CD14-positive monocyte (primary cell): ENCODE measurements at regions of chr13 and their contacts with region 1.

Region 1: DNA sequence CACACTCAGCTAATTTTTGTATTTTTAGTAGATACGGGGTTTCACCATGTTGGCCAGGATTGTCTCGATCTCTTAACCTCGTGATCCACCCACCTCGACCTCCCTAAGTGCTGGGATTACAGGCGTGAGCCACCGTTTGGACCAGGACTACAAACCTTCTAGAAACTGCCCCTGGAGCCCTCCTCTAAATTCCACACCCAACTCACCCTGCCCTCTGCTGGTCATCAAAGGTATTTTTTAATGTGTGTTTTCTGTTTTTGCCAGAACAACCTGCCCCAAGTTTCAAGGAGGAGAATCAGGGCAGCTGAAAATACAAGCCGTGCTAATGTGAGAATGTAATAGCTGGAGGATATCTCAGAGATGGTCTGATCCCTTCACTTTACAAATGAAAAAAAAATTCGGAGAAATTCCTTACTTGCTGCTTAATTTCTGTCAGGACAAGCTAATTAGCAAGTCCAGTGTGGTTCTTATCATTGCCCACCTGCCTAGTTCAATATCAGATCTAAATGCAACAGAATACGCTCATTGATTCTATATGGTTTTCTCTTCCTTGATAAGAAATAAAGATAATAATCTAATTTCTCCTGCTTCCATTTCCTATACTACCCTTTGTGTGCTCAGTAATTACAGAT is 4.1 kb downstream of the ATP8A2 start:
- DNase-seq: peak; percentile 6 to 24 (median 16)
- H3K4me3 ChIP-seq: no peak overlapping the region
- H3K4me3 Mint-ChIP-seq: no peak overlapping the region
- H3K27ac ChIP-seq: no peak overlapping the region
- H3K27ac Mint-ChIP-seq: no peak overlapping the region
- H3K4me1 ChIP-seq: no peaks in the 10 kb centered on the region
- H3K4me1 Mint-ChIP-seq: peaks cover 8% of the 10 kb centered on the region
- H3K27me3 ChIP-seq: peaks cover 35 to 56% of the 10 kb centered on the region in 2 donors
- H3K27me3 Mint-ChIP-seq: peaks cover 42 to 57% (median 48%) of the 10 kb centered on the region in 3 donors
- CTCF ChIP-seq: peak; percentile 74

Region 2: GRCh38 chr13:24995226-24995804 is 380.5 kb before region 1 on chr13:
- intact Hi-C with region 1: loop called in 1 of 2 experiments (anchors 5 kb)
- DNase-seq: peak; percentile 37 to 63 (median 61)
- H3K4me3 ChIP-seq: no peak overlapping the region
- H3K4me3 Mint-ChIP-seq: no peak overlapping the region
- H3K27ac ChIP-seq: no peak overlapping the region
- H3K27ac Mint-ChIP-seq: no peak overlapping the region
- H3K4me1 ChIP-seq: no peaks in the 10 kb centered on the region
- H3K4me1 Mint-ChIP-seq: peaks cover 3% of the 10 kb centered on the region
- H3K27me3 ChIP-seq: peaks cover 3 to 8% of the 10 kb centered on the region in 2 donors
- H3K27me3 Mint-ChIP-seq: peaks cover 7 to 14% (median 14%) of the 10 kb centered on the region in 3 donors
- CTCF ChIP-seq: peak; percentile 80

Region 3: GRCh38 chr13:25051065-25051464 is 324.8 kb before region 1 on chr13:
- intact Hi-C with region 1: no loop called
- DNase-seq: no peak
- H3K4me3 ChIP-seq: no peak overlapping the region
- H3K4me3 Mint-ChIP-seq: no peak overlapping the region
- H3K27ac ChIP-seq: no peak overlapping the region
- H3K27ac Mint-ChIP-seq: no peak overlapping the region
- H3K4me1 ChIP-seq: no peaks in the 10 kb centered on the region
- H3K4me1 Mint-ChIP-seq: peaks cover 2% of the 10 kb centered on the region
- H3K27me3 ChIP-seq: peaks cover 28% of the 10 kb centered on the region in 2 donors
- H3K27me3 Mint-ChIP-seq: peaks cover 39 to 49% (median 45%) of the 10 kb centered on the region in 3 donors
- CTCF ChIP-seq: no peak

Region 4: GRCh38 chr13:25232937-25233515 is 142.8 kb before region 1 on chr13:
- intact Hi-C with region 1: loop called in 1 of 2 experiments (anchors 2 kb)
- DNase-seq: peak; percentile 29 to 63 (median 44)
- H3K4me3 ChIP-seq: no peak overlapping the region
- H3K4me3 Mint-ChIP-seq: no peak overlapping the region
- H3K27ac ChIP-seq: no peak overlapping the region
- H3K27ac Mint-ChIP-seq: no peak overlapping the region
- H3K4me1 ChIP-seq: peaks cover 0 to 3% of the 10 kb centered on the region in 2 donors
- H3K4me1 Mint-ChIP-seq: peaks cover 14% of the 10 kb centered on the region
- H3K27me3 ChIP-seq: peaks cover 0 to 14% of the 10 kb centered on the region in 2 donors
- H3K27me3 Mint-ChIP-seq: peaks cover 8 to 17% (median 14%) of the 10 kb centered on the region in 3 donors
- CTCF ChIP-seq: peak; percentile 82